ENCODE measurements at regions of chr10 and their contacts with region 1.

Region 1: GRCh38 chr10:100020142-100020885 is 10.6 kb upstream of the DNMBP start:
- DNase-seq: peak in 2 of 9 experiments; percentile 10 to 33
- ATAC-seq: peak; percentile 62
- H3K4me3 ChIP-seq: no peak overlapping the region
- H3K4me3 Mint-ChIP-seq: no peak overlapping the region
- H3K27ac ChIP-seq: no peak overlapping the region
- H3K27ac Mint-ChIP-seq: peak overlapping the region; percentile 20
- H3K4me1 ChIP-seq: no peaks in the 10 kb centered on the region
- H3K4me1 Mint-ChIP-seq: peaks cover 5% of the 10 kb centered on the region
- H3K27me3 ChIP-seq: no peaks in the 10 kb centered on the region
- H3K27me3 Mint-ChIP-seq: peaks cover 3% of the 10 kb centered on the region
- CTCF ChIP-seq: no peak

Region 2: DNA sequence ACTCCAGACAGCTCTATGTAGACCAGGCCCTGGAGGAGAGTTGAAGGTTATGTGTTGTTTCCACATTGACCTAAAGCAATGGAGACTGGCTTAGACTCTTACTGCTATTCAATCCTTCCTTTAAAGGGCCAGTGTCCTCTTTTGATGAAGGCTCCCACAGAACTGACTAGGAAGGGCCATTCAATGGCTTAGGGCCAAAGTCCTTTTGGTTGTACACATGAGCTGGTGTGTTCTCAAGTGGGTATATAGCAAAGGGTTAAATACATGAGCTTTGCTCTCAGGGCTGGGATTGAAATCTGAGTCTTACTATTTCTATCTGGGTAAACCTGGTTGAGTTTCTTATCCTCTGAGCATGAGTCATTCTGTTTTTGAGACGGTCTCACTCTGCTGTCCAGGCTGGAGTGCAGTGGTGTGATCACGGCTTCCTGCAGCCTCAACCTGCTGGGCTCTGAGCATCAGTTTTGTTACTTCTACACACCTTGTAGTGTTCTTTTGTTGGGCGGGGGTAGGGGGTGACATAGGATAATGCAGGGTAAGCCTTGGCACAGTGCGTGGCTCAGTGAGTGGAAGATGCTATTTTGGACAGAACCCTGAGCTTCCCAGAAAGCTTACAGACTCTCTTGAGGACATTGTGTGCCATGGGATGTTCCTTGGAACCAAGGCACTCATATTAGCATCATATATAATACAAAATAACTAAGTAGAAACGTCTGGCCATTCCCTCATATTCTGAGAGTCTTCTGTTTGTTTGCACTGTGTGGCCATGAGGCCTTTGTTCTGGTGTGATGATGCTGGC is 147.7 kb before region 1 on chr10:
- CTCF ChIA-PET with region 1: no interaction called
- POLR2A ChIA-PET with region 1: no interaction called
- intact Hi-C with region 1: no loop called
- DNase-seq: no peak
- ATAC-seq: no peak
- H3K4me3 ChIP-seq: no peak overlapping the region
- H3K4me3 Mint-ChIP-seq: no peak overlapping the region
- H3K27ac ChIP-seq: no peak overlapping the region
- H3K27ac Mint-ChIP-seq: no peak overlapping the region
- H3K4me1 ChIP-seq: peaks cover 16% of the 10 kb centered on the region
- H3K4me1 Mint-ChIP-seq: peaks cover 17% of the 10 kb centered on the region
- H3K27me3 ChIP-seq: peaks cover 9 to 11% of the 10 kb centered on the region in 2 experiments
- H3K27me3 Mint-ChIP-seq: peaks cover 53% of the 10 kb centered on the region
- CTCF ChIP-seq: no peak

Region 3: DNA sequence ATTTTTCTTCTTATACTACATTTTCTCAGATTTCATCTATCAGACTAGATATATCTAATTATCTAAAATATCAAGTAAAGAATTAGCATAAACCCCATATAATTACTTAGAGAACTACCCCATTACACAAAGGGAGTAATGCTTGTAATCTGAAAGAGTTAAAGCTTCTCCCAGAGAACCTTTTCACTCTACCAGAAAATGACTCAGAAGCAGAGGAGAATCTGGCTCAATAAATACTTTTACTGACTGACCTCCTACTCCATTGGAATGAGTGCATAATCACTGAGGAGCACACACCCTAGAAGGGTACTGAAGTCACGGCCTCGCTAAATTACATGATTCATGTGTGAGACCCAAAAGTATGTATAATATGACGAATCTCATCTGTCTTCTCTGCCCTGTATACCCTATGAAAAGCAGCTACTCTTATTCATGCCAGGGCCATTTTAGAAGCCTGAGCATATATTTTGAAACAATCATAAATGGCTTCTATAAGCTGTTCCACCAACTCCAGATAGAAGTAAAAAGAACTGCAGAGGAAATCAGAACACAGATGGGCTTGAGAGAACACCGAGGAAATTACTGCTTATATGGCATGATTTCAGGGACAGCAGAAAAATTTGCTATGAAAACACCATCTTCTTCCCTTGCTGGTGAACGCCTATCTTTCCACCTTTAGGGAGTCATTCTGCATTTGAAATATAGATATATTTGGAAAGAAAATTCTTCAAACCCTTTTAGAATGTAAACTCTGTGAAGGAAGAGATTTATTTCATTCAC is 43.2 kb before region 1 on chr10:
- CTCF ChIA-PET with region 1: no interaction called
- POLR2A ChIA-PET with region 1: no interaction called
- intact Hi-C with region 1: loop called in 1 of 2 experiments (anchors 10 kb)
- DNase-seq: no peak
- ATAC-seq: no peak
- H3K4me3 ChIP-seq: no peak overlapping the region
- H3K4me3 Mint-ChIP-seq: no peak overlapping the region
- H3K27ac ChIP-seq: no peak overlapping the region
- H3K27ac Mint-ChIP-seq: no peak overlapping the region
- H3K4me1 ChIP-seq: no peaks in the 10 kb centered on the region
- H3K4me1 Mint-ChIP-seq: no peaks in the 10 kb centered on the region
- H3K27me3 ChIP-seq: no peaks in the 10 kb centered on the region
- H3K27me3 Mint-ChIP-seq: no peaks in the 10 kb centered on the region
- CTCF ChIP-seq: no peak

Region 4: GRCh38 chr10:100129424-100129823 is 109.1 kb after region 1 on chr10:
- CTCF ChIA-PET with region 1: no interaction called
- POLR2A ChIA-PET with region 1: no interaction called
- intact Hi-C with region 1: no loop called
- DNase-seq: no peak
- ATAC-seq: no peak
- H3K4me3 ChIP-seq: no peak overlapping the region
- H3K4me3 Mint-ChIP-seq: no peak overlapping the region
- H3K27ac ChIP-seq: no peak overlapping the region
- H3K27ac Mint-ChIP-seq: no peak overlapping the region
- H3K4me1 ChIP-seq: no peaks in the 10 kb centered on the region
- H3K4me1 Mint-ChIP-seq: no peaks in the 10 kb centered on the region
- H3K27me3 ChIP-seq: no peaks in the 10 kb centered on the region
- H3K27me3 Mint-ChIP-seq: peaks cover 12% of the 10 kb centered on the region
- CTCF ChIP-seq: no peak